ENCODE measurements at regions of chr11 and their contacts with region 1.

Region 1: DNA sequence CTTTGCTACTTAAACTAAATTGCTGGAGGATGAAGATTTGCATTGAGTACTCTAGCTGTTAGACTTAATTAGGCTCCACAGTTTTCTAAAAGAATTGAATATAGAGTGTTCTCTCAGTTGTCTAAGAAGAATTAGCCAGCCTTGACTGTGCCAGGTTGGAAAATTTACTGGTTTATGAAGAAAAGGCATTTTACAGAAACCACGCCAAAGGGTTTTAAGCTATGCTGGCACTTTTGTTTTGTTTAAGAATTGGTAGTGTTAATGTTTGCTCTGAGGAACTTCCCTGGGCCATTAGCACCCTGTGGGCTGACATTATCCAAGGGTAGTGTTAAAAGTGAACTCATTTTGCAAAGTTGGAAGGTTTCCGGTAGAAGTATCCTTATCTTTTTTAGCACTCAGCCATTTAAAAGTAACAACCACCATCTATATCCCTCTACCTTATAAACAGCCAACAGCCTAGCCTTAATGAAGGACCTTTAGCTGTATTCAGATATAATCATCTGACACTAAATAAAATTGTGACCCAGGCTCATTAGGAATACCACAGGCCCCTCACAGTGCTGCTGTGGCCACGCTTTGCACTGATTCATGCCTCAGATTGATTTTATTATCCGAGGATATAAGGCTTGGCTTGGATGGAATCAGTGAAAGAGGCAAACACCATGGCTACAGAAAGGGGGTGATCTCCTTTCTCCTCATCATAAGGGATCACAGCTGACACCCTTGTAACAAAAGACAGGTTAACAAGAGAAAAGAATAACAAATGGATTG is 158.9 kb downstream of the NCAM1 start:
- DNase-seq: no peak
- ATAC-seq: no peak
- H3K4me3 ChIP-seq: no peak overlapping the region
- H3K27ac ChIP-seq: no peak overlapping the region
- H3K4me1 ChIP-seq: no peaks in the 10 kb centered on the region
- H3K27me3 ChIP-seq: no peaks in the 10 kb centered on the region
- CTCF ChIP-seq: no peak

Region 2: DNA sequence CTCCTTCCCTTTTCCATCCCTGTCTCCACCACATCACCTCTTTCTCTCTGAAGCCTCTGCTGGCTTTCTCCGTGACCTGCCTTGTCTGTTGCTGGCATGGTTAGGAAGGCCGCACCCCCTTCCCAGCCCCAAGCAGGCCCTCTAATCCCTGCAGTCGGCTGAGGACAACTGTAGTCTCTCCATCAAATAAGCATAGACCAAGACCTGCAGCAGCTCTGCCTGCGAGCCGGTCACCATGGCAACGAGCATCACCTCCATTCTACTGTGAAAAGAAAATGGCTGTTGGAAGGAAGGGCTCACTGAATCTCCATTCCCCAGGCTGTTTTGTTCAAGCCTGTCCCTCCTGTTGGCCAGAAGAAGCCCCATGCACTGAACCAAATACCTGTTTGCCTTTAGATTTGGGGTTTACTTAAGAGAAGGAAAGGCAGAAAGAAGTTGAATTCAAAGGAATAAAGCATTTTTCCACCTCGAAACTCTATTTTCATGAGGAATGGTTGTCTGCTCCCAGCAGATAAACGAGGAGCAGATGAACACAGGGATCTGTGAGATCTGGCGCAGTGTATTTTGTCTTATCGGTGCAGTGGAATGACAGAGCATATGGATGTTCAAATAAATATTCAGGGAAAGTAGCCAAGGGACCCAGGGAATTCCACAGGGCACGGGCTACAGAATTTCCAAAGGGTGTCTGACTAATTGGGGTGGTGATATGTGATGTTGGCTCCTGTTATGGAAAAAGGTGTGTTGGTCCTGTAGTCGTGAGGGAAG is 81.1 kb after region 1 on chr11:
- intact Hi-C with region 1: loop called in 1 of 3 experiments (anchors 5 kb)
- DNase-seq: no peak
- ATAC-seq: no peak
- H3K4me3 ChIP-seq: no peak overlapping the region
- H3K27ac ChIP-seq: no peak overlapping the region
- H3K4me1 ChIP-seq: no peaks in the 10 kb centered on the region
- H3K27me3 ChIP-seq: peaks cover 0 to 9% (median 0%) of the 10 kb centered on the region in 4 donors
- CTCF ChIP-seq: no peak

Measured in pancreas (tissue), 10 donors.